Testis (tissue), 5 donors: ENCODE measurements at regions of chr19 and their contacts with region 1.

Region 1: GRCh38 chr19:46288896-46289588 is 7.8 kb upstream of the HIF3A start:
- DNase-seq: no peak
- H3K4me3 ChIP-seq: no peak overlapping the region
- H3K27ac ChIP-seq: no peak overlapping the region
- H3K4me1 ChIP-seq: no peaks in the 10 kb centered on the region
- H3K27me3 ChIP-seq: no peaks in the 10 kb centered on the region
- CTCF ChIP-seq: no peak
- POLR2A ChIP-seq: no peak

Region 2: GRCh38 chr19:46218160-46218559 is 70.9 kb before region 1 on chr19:
- intact Hi-C with region 1: no loop called
- DNase-seq: peak; percentile 53
- H3K4me3 ChIP-seq: no peak overlapping the region
- H3K27ac ChIP-seq: no peak overlapping the region
- H3K4me1 ChIP-seq: peaks cover 2% of the 10 kb centered on the region
- H3K27me3 ChIP-seq: no peaks in the 10 kb centered on the region
- CTCF ChIP-seq: no peak
- POLR2A ChIP-seq: no peak

Region 3: GRCh38 chr19:46495787-46496101 is 206.7 kb after region 1 on chr19 and contains the start of gene PNMA8B:
- intact Hi-C with region 1: loop called (anchors 10 kb)
- DNase-seq: peak; percentile 86
- H3K4me3 ChIP-seq: peak within 1 kb of the TSS; percentile 33 to 52
- H3K27ac ChIP-seq: no peak within 1 kb of the TSS
- H3K4me1 ChIP-seq: peaks cover 20% of the 10 kb centered on the region
- H3K27me3 ChIP-seq: no peaks in the 10 kb centered on the region
- CTCF ChIP-seq: peak in 1 of 3 experiments; percentile 17
- POLR2A ChIP-seq: no peak
- total RNA-seq, gene PNMA8B: 3.1 TPM